Transverse colon (tissue), 4 donors: ENCODE measurements at regions of chr16 and their contacts with region 1.

Region 1: GRCh38 chr16:81006814-81007696 is at the starts of genes CENPN and CMC2:
- DNase-seq: peak; percentile 99
- H3K4me3 ChIP-seq: peak within 1 kb of the TSS; percentile 76 to 95 (median 86)
- H3K27ac ChIP-seq: peak within 1 kb of the TSS; percentile 96 to 100 (median 98)
- H3K4me1 ChIP-seq: peaks cover 4 to 29% (median 21%) of the 10 kb centered on the region in 4 donors
- H3K27me3 ChIP-seq: no peaks in the 10 kb centered on the region
- CTCF ChIP-seq: peak in 2 of 5 experiments; percentile 12 to 42
- EP300 ChIP-seq: no peak
- POLR2A ChIP-seq: peak; percentile 91
- total RNA-seq, gene CENPN: 4.9 to 12.7 (median 8.5) TPM
- total RNA-seq, gene CMC2: 2.8 to 42.9 (median 29.8) TPM

Region 2: GRCh38 chr16:79767421-79768275 is 1239.4 kb before region 1 on chr16:
- in situ Hi-C with region 1: no loop called
- intact Hi-C with region 1: loop called (anchors 10 kb)
- DNase-seq: peak; percentile 57
- H3K4me3 ChIP-seq: peak overlapping the region in 3 of 4 donors; percentile 20 to 37 (median 25)
- H3K27ac ChIP-seq: peak overlapping the region; percentile 82 to 89 (median 84)
- H3K4me1 ChIP-seq: peaks cover 19 to 49% (median 42%) of the 10 kb centered on the region in 4 donors
- H3K27me3 ChIP-seq: no peaks in the 10 kb centered on the region
- CTCF ChIP-seq: peak; percentile 14 to 32 (median 30)
- EP300 ChIP-seq: no peak
- POLR2A ChIP-seq: no peak

Region 3: GRCh38 chr16:81095953-81096717 is 89.1 kb after region 1 on chr16 and contains the start of gene GCSH:
- in situ Hi-C with region 1: no loop called
- intact Hi-C with region 1: loop called (anchors 10 kb)
- DNase-seq: peak; percentile 99
- H3K4me3 ChIP-seq: peak within 1 kb of the TSS; percentile 65 to 77 (median 76)
- H3K27ac ChIP-seq: peak within 1 kb of the TSS; percentile 77 to 90 (median 86)
- H3K4me1 ChIP-seq: peaks cover 0 to 15% (median 3%) of the 10 kb centered on the region in 4 donors
- H3K27me3 ChIP-seq: no peaks in the 10 kb centered on the region
- CTCF ChIP-seq: no peak
- EP300 ChIP-seq: no peak
- POLR2A ChIP-seq: no peak
- total RNA-seq, gene GCSH: 5.6 to 13.0 (median 8.9) TPM in 3 of 4 donors, not detected in the other